ENCODE measurements at regions of chr1 and their contacts with region 1.

Region 1: GRCh38 chr1:45303582-45304310 is 22.9 kb upstream of the HPDL start:
- DNase-seq: peak; percentile 94 to 97 (median 95)
- H3K4me3 ChIP-seq: peak overlapping the region; percentile 42 to 86
- H3K4me3 Mint-ChIP-seq: peak overlapping the region; percentile 87 to 94 (median 92)
- H3K27ac ChIP-seq: peak overlapping the region; percentile 85
- H3K27ac Mint-ChIP-seq: peak overlapping the region; percentile 93 to 98 (median 96)
- H3K4me1 ChIP-seq: peaks cover 11% of the 10 kb centered on the region
- H3K4me1 Mint-ChIP-seq: peaks cover 11 to 24% (median 18%) of the 10 kb centered on the region in 4 donors
- H3K27me3 ChIP-seq: no peaks in the 10 kb centered on the region
- H3K27me3 Mint-ChIP-seq: no peaks in the 10 kb centered on the region

Region 2: DNA sequence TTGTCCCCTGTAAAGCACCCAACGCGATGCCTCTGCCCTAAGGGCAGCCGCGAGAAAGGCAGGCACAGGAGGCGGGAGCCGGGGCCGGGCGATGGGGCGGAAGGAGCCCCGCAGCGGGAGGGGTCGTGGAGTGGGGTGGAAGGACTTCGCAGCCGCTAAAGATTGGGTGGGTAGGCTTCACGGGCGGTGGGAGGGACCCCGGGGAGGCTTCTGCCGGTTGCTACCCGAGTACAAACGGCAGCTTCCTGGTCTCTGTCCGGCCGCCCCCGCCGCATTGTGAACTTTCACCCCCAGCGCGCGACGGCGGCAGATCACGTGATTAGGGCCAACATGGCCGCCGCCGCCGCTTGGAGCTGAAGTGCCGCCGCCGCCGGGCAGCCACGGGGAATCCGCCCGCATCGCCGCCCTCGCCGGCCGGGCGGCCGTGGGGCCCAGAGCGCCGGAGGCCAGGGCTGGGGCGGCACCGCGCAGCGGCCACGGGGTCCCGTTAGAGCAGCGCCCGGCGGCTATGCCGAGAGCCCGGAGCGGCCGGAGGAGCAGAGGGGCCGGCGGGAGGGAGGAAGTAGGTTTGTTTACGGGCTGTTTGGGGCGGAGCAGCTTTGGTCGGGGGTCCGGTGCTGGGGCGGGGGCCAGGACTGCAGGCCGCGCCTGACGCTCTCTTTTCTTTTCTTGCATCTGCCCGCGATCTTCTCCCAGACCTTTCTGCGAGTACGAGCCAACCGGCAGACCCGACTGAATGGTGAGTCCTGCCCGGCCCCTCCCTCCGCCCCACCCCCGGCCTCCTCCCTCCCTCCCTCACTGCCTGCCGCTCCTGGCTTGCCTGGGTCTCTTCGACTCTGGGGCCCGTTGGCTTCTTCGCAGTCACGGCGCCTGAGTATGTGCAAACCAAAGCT is 671.9 kb before region 1 on chr1:
- CTCF ChIA-PET with region 1: no interaction called
- POLR2A ChIA-PET with region 1: interaction called, 11 read pairs
- intact Hi-C with region 1: no loop called
- DNase-seq: peak; percentile 86 to 92 (median 88)
- H3K4me3 ChIP-seq: peak overlapping the region; percentile 38 to 65
- H3K4me3 Mint-ChIP-seq: peak overlapping the region; percentile 91 to 97 (median 93)
- H3K27ac ChIP-seq: peak overlapping the region; percentile 85
- H3K27ac Mint-ChIP-seq: peak overlapping the region; percentile 96 to 99 (median 97)
- H3K4me1 ChIP-seq: peaks cover 35% of the 10 kb centered on the region
- H3K4me1 Mint-ChIP-seq: peaks cover 27 to 50% (median 33%) of the 10 kb centered on the region in 4 donors
- H3K27me3 ChIP-seq: no peaks in the 10 kb centered on the region
- H3K27me3 Mint-ChIP-seq: no peaks in the 10 kb centered on the region

Region 3: DNA sequence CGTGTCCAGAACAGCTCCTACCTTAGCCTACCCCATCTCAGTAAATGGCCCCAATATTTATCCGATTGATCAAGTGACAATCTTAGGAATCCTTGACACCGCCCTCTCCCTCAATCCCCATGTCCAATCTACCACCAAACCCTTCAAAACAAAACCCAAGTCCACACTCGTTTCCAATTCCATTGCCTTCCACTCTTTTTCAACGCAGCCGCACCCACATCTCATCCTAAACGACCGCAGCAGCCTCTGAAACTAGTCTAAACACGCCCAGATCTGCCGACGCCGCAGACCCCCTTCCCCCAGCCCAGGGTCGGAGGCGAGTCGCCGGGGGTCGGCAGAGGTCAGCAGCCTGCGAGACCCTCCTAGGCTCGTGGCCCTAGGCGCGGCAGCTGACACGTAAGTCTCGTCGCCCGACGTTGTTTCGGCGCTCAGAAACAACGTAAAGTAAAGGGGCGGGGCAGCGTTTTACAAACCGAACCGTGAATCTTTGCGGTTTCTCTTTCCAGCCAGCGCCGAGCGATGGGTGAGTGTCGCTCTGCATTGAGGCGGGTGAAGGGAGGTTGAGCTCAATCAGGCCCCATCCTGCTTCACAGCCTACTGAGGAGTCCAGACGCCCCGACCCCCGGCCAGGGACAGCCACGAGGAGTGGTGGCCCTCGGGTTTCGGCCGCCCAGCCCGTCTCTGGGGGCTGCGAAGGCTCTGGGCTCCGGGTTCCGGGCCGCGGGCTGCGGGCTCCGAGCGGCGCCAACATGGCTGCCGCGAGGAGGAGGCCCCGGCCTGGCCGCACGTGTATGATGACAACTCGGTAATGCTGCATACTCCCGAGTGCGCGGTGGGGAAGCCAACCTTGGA is 528.4 kb before region 1 on chr1 and contains the start of gene RPS8:
- CTCF ChIA-PET with region 1: interaction called, 4 read pairs
- POLR2A ChIA-PET with region 1: interaction called, 23 read pairs
- intact Hi-C with region 1: no loop called
- DNase-seq: peak; percentile 89 to 92 (median 91)
- H3K4me3 ChIP-seq: peak within 1 kb of the TSS; percentile 87 to 88
- H3K4me3 Mint-ChIP-seq: peak within 1 kb of the TSS; percentile 89 to 98 (median 94)
- H3K27ac ChIP-seq: peak within 1 kb of the TSS; percentile 78
- H3K27ac Mint-ChIP-seq: peak within 1 kb of the TSS; percentile 82 to 99 (median 98)
- H3K4me1 ChIP-seq: peaks cover 25% of the 10 kb centered on the region
- H3K4me1 Mint-ChIP-seq: peaks cover 20 to 56% (median 27%) of the 10 kb centered on the region in 4 donors
- H3K27me3 ChIP-seq: no peaks in the 10 kb centered on the region
- H3K27me3 Mint-ChIP-seq: no peaks in the 10 kb centered on the region
- total RNA-seq, gene RPS8: 2,728 to 2,811 TPM

Region 4: DNA sequence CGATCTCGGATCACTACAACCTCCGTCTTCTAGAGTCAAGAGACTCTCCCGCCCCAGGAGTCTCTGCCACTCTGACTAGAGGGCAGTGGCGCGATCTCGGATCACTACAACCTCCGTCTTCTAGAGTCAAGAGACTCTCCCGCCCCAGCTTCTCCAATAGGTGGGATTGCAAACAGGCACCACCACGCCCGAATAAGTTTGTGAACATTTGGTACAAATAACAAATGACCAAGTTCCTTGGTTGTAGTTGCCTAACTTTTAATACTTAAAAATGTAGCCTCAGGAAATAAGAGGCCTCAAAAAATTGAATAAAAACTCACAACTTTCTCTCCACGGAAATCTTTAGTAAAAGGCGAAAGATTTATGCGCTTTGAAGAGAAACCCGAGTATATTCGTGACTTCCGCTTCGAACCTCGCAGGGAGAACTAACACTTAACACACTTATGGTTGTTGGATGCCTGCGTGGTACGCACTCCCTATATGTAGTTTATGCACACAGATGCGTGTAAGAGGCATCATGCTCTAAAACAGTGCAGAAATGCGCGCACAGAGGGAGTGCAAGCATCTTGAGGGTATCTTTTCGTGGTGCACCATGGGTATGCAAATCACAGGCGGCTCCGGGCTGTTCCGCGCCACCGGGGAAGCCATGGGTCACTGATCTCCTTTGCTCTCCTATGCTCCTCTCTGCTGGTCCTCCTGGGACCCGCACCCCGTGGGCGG is 484.0 kb before region 1 on chr1:
- CTCF ChIA-PET with region 1: interaction called, 3 read pairs
- POLR2A ChIA-PET with region 1: interaction called, 15 read pairs
- intact Hi-C with region 1: no loop called
- DNase-seq: peak; percentile 83 to 90 (median 88)
- H3K4me3 ChIP-seq: peak overlapping the region; percentile 74 to 86
- H3K4me3 Mint-ChIP-seq: peak overlapping the region; percentile 91 to 96 (median 95)
- H3K27ac ChIP-seq: peak overlapping the region; percentile 88
- H3K27ac Mint-ChIP-seq: peak overlapping the region; percentile 100
- H3K4me1 ChIP-seq: peaks cover 33% of the 10 kb centered on the region
- H3K4me1 Mint-ChIP-seq: peaks cover 22 to 57% (median 35%) of the 10 kb centered on the region in 4 donors
- H3K27me3 ChIP-seq: no peaks in the 10 kb centered on the region
- H3K27me3 Mint-ChIP-seq: no peaks in the 10 kb centered on the region

Region 5: GRCh38 chr1:45205910-45206721 is 97.6 kb before region 1 on chr1 and contains the start of gene ZSWIM5:
- CTCF ChIA-PET with region 1: no interaction called
- POLR2A ChIA-PET with region 1: interaction called, 6 read pairs
- intact Hi-C with region 1: loop called (anchors 1 kb)
- DNase-seq: peak; percentile 63 to 77 (median 75)
- H3K4me3 ChIP-seq: peak within 1 kb of the TSS; percentile 1 to 58
- H3K4me3 Mint-ChIP-seq: peak within 1 kb of the TSS; percentile 93 to 97 (median 95)
- H3K27ac ChIP-seq: peak within 1 kb of the TSS; percentile 31
- H3K27ac Mint-ChIP-seq: peak within 1 kb of the TSS; percentile 85 to 93 (median 90)
- H3K4me1 ChIP-seq: peaks cover 22% of the 10 kb centered on the region
- H3K4me1 Mint-ChIP-seq: peaks cover 17 to 33% (median 26%) of the 10 kb centered on the region in 4 donors
- H3K27me3 ChIP-seq: no peaks in the 10 kb centered on the region
- H3K27me3 Mint-ChIP-seq: peaks cover 1% of the 10 kb centered on the region in 2 donors
- total RNA-seq, gene ZSWIM5: 3.4 to 3.7 TPM

Region 6: DNA sequence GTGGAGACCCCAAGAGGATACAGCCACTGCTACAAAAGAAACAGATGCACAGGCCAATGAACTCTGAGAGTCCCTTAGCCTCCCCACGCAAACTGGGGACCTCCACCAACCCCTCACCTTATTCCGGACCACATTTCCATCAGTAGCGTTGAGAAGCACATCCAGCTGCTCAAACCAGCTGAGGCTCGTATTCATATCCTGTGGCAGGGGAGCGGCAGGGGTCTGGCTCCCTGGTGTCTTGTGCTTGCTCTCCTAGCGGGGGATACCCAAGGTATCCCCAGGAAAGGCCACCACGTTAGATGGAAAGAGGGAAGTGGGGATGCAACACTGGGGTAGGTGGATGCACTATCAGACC is 195.6 kb after region 1 on chr1:
- CTCF ChIA-PET with region 1: interaction called, 60 read pairs
- POLR2A ChIA-PET with region 1: interaction called, 11 read pairs
- intact Hi-C with region 1: no loop called
- DNase-seq: peak in 1 of 5 donors; percentile 4
- H3K4me3 ChIP-seq: peak overlapping the region; percentile 62 to 88
- H3K4me3 Mint-ChIP-seq: peak overlapping the region; percentile 91 to 96 (median 95)
- H3K27ac ChIP-seq: peak overlapping the region; percentile 62
- H3K27ac Mint-ChIP-seq: peak overlapping the region; percentile 81 to 98 (median 96)
- H3K4me1 ChIP-seq: peaks cover 18% of the 10 kb centered on the region
- H3K4me1 Mint-ChIP-seq: peaks cover 31 to 34% (median 31%) of the 10 kb centered on the region in 4 donors
- H3K27me3 ChIP-seq: no peaks in the 10 kb centered on the region
- H3K27me3 Mint-ChIP-seq: no peaks in the 10 kb centered on the region

Measured in CD4-positive, alpha-beta memory T cell (primary cell).